ENCODE measurements at regions of chr5 and their contacts with region 1.

Region 1: DNA sequence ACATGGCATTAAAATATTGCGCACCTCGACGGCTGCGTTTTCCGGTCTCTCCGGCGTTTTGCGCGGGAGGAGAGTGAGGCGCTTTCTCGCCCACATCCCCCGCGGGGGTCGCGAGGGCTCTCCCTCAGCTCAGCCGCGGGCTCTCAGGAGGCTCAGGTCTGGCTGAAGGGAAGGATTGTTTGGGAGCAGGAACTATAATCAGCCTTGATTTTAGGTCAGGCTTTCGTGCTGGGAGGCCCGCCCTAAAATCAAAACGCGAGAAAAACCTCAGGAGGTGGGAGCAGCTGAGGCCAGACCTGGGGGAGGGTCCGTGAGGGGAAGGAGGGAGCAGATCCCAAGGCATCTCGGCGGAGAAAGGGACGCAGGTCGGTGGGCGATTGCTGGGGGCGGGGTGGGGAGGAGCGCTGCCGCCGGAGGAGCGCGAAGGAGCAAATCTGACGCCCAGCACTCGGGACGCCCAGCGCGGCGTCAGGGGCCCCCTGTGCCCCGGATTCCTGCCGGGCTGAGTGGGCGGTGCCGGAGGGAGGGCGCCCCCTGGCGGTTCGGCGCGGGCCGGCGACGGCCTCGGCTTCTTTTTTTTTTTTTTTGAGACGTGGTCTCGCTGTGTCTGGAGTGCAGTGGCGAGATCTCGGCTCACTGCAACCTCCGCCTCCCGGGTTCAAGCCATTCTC is 18.7 kb upstream of the RNF130 start:
- DNase-seq: peak; percentile 92
- H3K4me3 ChIP-seq: peak overlapping the region; percentile 49 to 64
- H3K27ac ChIP-seq: no peak overlapping the region
- H3K4me1 ChIP-seq: peaks cover 0 to 5% of the 10 kb centered on the region in 2 experiments; a peak in 1 of 4 replicates
- H3K27me3 ChIP-seq: no peaks in the 10 kb centered on the region
- CTCF ChIP-seq: peak; percentile 90
- EP300 ChIP-seq: no peak; a peak in 1 of 4 replicates
- RAD21 ChIP-seq: peak; percentile 65

Region 2: GRCh38 chr5:179907570-179908324 is 182.5 kb before region 1 on chr5 and contains the start of gene TBC1D9B:
- CTCF ChIA-PET with region 1: interaction called, 16 read pairs
- POLR2A ChIA-PET with region 1: no interaction called
- DNase-seq: peak; percentile 96
- H3K4me3 ChIP-seq: peak within 1 kb of the TSS; percentile 56 to 76
- H3K27ac ChIP-seq: peak within 1 kb of the TSS in 1 of 2 experiments; percentile 70; a peak in 2 of 4 replicates
- H3K4me1 ChIP-seq: peaks cover 0 to 9% of the 10 kb centered on the region in 2 experiments; a peak in 2 of 4 replicates
- H3K27me3 ChIP-seq: no peaks in the 10 kb centered on the region
- CTCF ChIP-seq: peak; percentile 31
- EP300 ChIP-seq: no peak
- RAD21 ChIP-seq: peak; percentile 10; the same call in 1 of the 2 replicates
- polyA plus RNA-seq, gene TBC1D9B: 75.6 and 76.1 TPM in 2 replicates

Region 3: GRCh38 chr5:180071531-180072255 is 18.5 kb before region 1 on chr5 and contains the start of gene RNF130:
- CTCF ChIA-PET with region 1: interaction called, 11 read pairs
- POLR2A ChIA-PET with region 1: no interaction called
- DNase-seq: peak; percentile 98
- H3K4me3 ChIP-seq: peak within 1 kb of the TSS; percentile 80 to 89
- H3K27ac ChIP-seq: peak within 1 kb of the TSS; percentile 78 to 94
- H3K4me1 ChIP-seq: peaks cover 0 to 21% of the 10 kb centered on the region in 2 experiments; a peak in 2 of 4 replicates
- H3K27me3 ChIP-seq: no peaks in the 10 kb centered on the region
- CTCF ChIP-seq: no peak
- EP300 ChIP-seq: no peak
- RAD21 ChIP-seq: no peak
- polyA plus RNA-seq, gene RNF130: 41.4 and 49.6 TPM in 2 replicates

Region 4: DNA sequence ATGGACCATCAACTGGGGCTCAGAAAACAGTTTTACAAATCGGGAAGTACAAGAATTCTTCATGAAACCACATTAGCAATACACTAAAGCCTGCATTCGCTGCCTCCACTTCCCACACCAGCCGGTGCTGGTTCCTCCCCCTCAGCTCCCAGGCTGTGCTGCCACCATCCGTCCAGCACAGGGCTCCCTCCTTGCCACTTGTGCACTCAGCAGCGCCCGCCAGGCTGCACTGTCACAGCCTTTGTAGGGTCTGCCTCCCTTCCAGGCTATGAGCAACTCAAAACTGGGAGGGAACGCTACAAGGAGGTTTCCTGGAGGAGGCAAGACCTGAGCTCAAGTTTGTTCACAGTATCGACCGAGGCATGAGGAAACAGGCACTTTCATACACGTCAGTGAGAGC is 193.9 kb after region 1 on chr5:
- CTCF ChIA-PET with region 1: no interaction called
- POLR2A ChIA-PET with region 1: no interaction called
- DNase-seq: no peak
- H3K4me3 ChIP-seq: no peak overlapping the region
- H3K27ac ChIP-seq: no peak overlapping the region
- H3K4me1 ChIP-seq: peaks cover 0 to 15% of the 10 kb centered on the region in 2 experiments; a peak in 2 of 4 replicates
- H3K27me3 ChIP-seq: no peaks in the 10 kb centered on the region
- CTCF ChIP-seq: no peak
- EP300 ChIP-seq: no peak
- RAD21 ChIP-seq: no peak

Measured in SK-N-SH (cell line).